Right ventricle myocardium superior (tissue), 1 donor: ENCODE measurements at regions of chr7 and their contacts with region 1.

Region 1: GRCh38 chr7:80659120-80660055 is 20.9 kb downstream of the CD36 start:
- DNase-seq: no peak
- ATAC-seq: peak; percentile 34

Region 2: GRCh38 chr7:80410081-80410480 is 249.3 kb before region 1 on chr7:
- intact Hi-C with region 1: no loop called
- DNase-seq: no peak
- ATAC-seq: no peak

Region 3: GRCh38 chr7:80432166-80432565 is 227.2 kb before region 1 on chr7:
- intact Hi-C with region 1: loop called (anchors 5 kb)
- DNase-seq: no peak
- ATAC-seq: no peak